Naive thymus-derived CD4-positive, alpha-beta T cell (primary cell): ENCODE measurements at regions of chr1 and their contacts with region 1.

Region 1: DNA sequence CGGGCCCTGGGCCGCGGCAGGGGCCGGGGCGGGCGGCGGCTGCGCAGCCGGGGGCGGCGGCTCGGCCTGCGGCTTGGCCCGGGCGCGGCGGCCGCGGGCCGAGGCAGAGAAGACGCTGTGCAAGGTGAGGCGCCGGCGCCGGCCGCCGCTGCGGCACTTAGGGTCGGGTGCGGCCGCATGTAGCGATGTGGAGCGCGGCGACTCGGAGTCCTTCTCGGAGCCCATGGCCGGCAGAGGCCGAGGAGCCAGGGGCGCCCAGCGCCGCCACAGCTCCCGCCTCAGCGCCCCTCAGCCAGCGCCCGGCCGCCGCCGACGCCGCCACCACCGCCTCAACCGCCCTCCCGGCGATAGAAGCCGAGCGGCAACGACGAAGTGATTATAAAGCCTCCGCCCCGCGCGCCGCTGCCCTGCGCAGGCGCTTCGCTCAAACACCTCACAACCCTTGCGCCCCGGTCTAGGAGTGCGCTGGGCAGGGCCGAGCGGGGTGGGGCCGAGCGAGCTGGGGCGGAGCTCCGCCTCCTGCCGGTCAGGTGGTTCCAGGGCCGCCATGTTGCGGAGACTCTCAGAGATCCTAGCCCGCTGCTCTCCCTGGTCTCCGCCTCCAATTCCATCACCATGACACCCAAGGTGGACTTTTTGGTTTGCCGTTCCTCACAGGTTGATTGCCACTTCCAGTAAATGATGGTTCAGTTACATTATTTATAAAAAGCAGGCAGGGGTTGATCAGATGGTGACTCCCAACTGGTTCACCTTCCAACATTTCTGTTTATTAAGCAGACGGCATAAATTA is at the start of gene RNF19B:
- DNase-seq: peak; percentile 85 to 94 (median 90)
- ATAC-seq: peak; percentile 97
- H3K4me3 ChIP-seq: peak within 1 kb of the TSS; percentile 67
- H3K4me3 Mint-ChIP-seq: peak within 1 kb of the TSS; percentile 88 to 93 (median 91)
- H3K27ac ChIP-seq: peak within 1 kb of the TSS; percentile 74
- H3K27ac Mint-ChIP-seq: peak within 1 kb of the TSS; percentile 71 to 96 (median 90)
- H3K4me1 ChIP-seq: peaks cover 19 to 24% of the 10 kb centered on the region in 2 donors
- H3K4me1 Mint-ChIP-seq: peaks cover 23 to 50% (median 37%) of the 10 kb centered on the region in 7 donors
- H3K27me3 ChIP-seq: no peaks in the 10 kb centered on the region
- H3K27me3 Mint-ChIP-seq: peaks cover 0 to 3% (median 0%) of the 10 kb centered on the region in 5 donors
- total RNA-seq, gene RNF19B: 17.1 to 58.1 (median 39.2) TPM

Region 2: DNA sequence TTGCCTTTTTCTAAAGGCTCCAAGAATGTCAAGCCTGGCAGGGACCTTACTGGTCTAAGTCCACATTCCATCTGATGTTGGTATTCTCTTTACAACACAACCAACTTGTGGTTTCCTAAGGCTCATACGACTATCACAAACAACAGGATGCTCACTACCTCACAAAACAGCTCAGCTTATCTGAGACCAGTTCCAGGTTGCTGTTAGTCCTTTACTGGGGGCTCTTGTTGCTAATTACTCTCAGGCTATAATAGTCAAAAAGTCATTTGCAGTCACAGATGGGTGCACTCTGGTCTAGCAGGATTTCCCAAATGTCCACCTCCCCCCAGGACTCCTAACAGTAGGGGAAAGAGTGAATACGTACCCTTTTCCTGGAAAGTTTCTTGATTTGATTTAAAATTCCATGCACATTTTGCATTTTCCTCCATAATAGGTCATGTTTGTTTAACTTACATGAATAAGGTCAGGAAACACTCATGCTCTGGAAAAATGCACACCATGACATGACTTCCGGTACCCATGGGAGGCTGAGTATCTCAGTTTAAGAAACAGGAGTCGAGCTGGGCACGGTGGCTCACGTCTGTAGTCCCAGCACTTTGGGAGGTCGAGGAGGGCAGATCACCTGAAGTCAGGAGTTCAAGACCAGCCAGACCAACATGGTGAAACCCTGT is 697.6 kb before region 1 on chr1:
- CTCF ChIA-PET with region 1: no interaction called
- POLR2A ChIA-PET with region 1: no interaction called
- intact Hi-C with region 1: no loop called
- DNase-seq: peak in 6 of 9 donors; percentile 41 to 68 (median 52)
- ATAC-seq: peak; percentile 69
- H3K4me3 ChIP-seq: peak overlapping the region; percentile 18
- H3K4me3 Mint-ChIP-seq: peak overlapping the region; percentile 70 to 96 (median 86)
- H3K27ac ChIP-seq: peak overlapping the region; percentile 64
- H3K27ac Mint-ChIP-seq: peak overlapping the region; percentile 93 to 100 (median 99)
- H3K4me1 ChIP-seq: peaks cover 55 to 78% of the 10 kb centered on the region in 2 donors
- H3K4me1 Mint-ChIP-seq: peaks cover 42 to 72% (median 54%) of the 10 kb centered on the region in 7 donors
- H3K27me3 ChIP-seq: no peaks in the 10 kb centered on the region
- H3K27me3 Mint-ChIP-seq: no peaks in the 10 kb centered on the region

Region 3: GRCh38 chr1:32933742-32934322 is 30.8 kb before region 1 on chr1:
- CTCF ChIA-PET with region 1: no interaction called
- POLR2A ChIA-PET with region 1: interaction called, 3 read pairs
- intact Hi-C with region 1: loop called in 1 of 2 experiments (anchors 2 kb)
- DNase-seq: peak in 1 of 9 donors; percentile 5
- ATAC-seq: no peak
- H3K4me3 ChIP-seq: no peak overlapping the region
- H3K4me3 Mint-ChIP-seq: no peak overlapping the region
- H3K27ac ChIP-seq: no peak overlapping the region
- H3K27ac Mint-ChIP-seq: no peak overlapping the region
- H3K4me1 ChIP-seq: no peaks in the 10 kb centered on the region
- H3K4me1 Mint-ChIP-seq: peaks cover 0 to 35% (median 0%) of the 10 kb centered on the region in 7 donors
- H3K27me3 ChIP-seq: no peaks in the 10 kb centered on the region
- H3K27me3 Mint-ChIP-seq: no peaks in the 10 kb centered on the region

Region 4: GRCh38 chr1:32992489-32993323 is 28.1 kb after region 1 on chr1:
- CTCF ChIA-PET with region 1: no interaction called
- POLR2A ChIA-PET with region 1: interaction called, 3 read pairs
- intact Hi-C with region 1: loop called in 1 of 2 experiments (anchors 1 kb)
- DNase-seq: peak in 1 of 9 donors; percentile 77
- ATAC-seq: peak; percentile 91
- H3K4me3 ChIP-seq: no peak overlapping the region
- H3K4me3 Mint-ChIP-seq: peak overlapping the region in 1 of 10 donors; percentile 73
- H3K27ac ChIP-seq: no peak overlapping the region
- H3K27ac Mint-ChIP-seq: peak overlapping the region in 6 of 9 donors; percentile 8 to 94 (median 34)
- H3K4me1 ChIP-seq: peaks cover 0 to 3% of the 10 kb centered on the region in 2 donors
- H3K4me1 Mint-ChIP-seq: peaks cover 5 to 74% (median 7%) of the 10 kb centered on the region in 7 donors
- H3K27me3 ChIP-seq: no peaks in the 10 kb centered on the region
- H3K27me3 Mint-ChIP-seq: no peaks in the 10 kb centered on the region

Region 5: DNA sequence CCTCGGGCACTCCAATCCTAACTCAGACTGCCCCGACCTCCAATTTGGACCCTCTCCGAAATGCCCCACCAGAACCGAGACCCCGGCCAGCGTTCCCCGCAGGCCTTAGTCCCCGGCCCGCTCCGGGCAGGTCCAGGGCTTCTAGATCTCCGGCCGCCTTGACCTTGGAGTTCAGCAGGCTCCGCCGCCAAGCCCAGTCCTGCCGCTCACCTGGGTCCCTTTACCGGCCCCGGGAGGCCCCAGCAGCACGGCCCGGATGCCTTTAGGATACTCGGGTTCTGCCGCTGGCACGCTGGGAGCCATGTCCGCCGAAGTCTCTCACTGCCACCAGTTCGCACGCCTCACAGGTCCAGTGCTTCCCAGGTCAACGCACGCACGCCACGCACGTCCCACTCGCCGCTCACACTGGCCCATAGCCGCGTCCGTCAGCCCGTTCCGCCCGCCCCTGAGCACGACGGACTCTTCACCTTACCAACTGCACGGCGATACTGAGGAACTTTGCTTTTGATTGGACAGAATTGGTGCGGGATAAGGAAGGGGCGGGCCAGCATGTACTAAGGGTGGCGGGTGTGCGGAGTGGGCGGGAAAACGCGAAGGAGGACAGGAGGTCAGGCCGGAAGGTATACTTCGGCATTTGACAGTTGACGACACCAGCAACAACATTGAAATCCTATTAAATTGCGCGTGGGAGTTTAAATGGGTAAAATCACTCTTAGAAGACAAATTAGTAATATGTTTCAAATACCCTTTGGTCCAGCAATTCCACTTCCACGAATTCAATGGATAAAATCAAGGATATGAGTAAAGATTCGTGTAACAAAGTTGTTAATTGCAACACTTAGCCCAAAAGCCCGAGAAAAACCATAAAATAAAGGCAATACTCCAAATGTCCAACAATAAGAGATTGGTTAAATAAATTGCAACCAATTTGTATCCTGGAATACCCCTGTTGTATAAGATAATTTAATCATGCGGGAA is 72.2 kb after region 1 on chr1 and contains the start of gene AK2:
- CTCF ChIA-PET with region 1: no interaction called
- POLR2A ChIA-PET with region 1: interaction called, 3 read pairs
- intact Hi-C with region 1: loop called (anchors 1 to 2 kb)
- DNase-seq: peak; percentile 63 to 91 (median 84)
- ATAC-seq: peak; percentile 100
- H3K4me3 ChIP-seq: peak within 1 kb of the TSS; percentile 70
- H3K4me3 Mint-ChIP-seq: peak within 1 kb of the TSS; percentile 92 to 99 (median 96)
- H3K27ac ChIP-seq: peak within 1 kb of the TSS; percentile 73
- H3K27ac Mint-ChIP-seq: peak within 1 kb of the TSS; percentile 74 to 96 (median 89)
- H3K4me1 ChIP-seq: peaks cover 11 to 24% of the 10 kb centered on the region in 2 donors
- H3K4me1 Mint-ChIP-seq: peaks cover 35 to 50% (median 46%) of the 10 kb centered on the region in 7 donors
- H3K27me3 ChIP-seq: no peaks in the 10 kb centered on the region
- H3K27me3 Mint-ChIP-seq: peaks cover 0 to 1% (median 0%) of the 10 kb centered on the region in 5 donors
- total RNA-seq, gene AK2: 53.8 to 219 (median 90.2) TPM

Region 6: GRCh38 chr1:33181921-33182341 is 217.3 kb after region 1 on chr1 and contains the start of gene TRIM62:
- CTCF ChIA-PET with region 1: no interaction called
- POLR2A ChIA-PET with region 1: interaction called, 9 read pairs
- intact Hi-C with region 1: loop called in 1 of 2 experiments (anchors 1 kb)
- DNase-seq: peak; percentile 57 to 80 (median 73)
- ATAC-seq: peak; percentile 85
- H3K4me3 ChIP-seq: peak within 1 kb of the TSS; percentile 78
- H3K4me3 Mint-ChIP-seq: peak within 1 kb of the TSS; percentile 84 to 95 (median 89)
- H3K27ac ChIP-seq: peak within 1 kb of the TSS; percentile 64
- H3K27ac Mint-ChIP-seq: peak within 1 kb of the TSS; percentile 47 to 89 (median 79)
- H3K4me1 ChIP-seq: peaks cover 8 to 12% of the 10 kb centered on the region in 2 donors
- H3K4me1 Mint-ChIP-seq: peaks cover 22 to 35% (median 31%) of the 10 kb centered on the region in 7 donors
- H3K27me3 ChIP-seq: no peaks in the 10 kb centered on the region
- H3K27me3 Mint-ChIP-seq: peaks cover 0 to 35% (median 7%) of the 10 kb centered on the region in 5 donors
- total RNA-seq, gene TRIM62: 13.2 to 24.2 (median 19.4) TPM